Stomach (tissue), 19 donors: ENCODE measurements at regions of chr15 and their contacts with region 1.

Region 1: GRCh38 chr15:82647045-82647834 is at the start of gene CPEB1:
- DNase-seq: peak in 1 of 2 donors; percentile 62
- H3K4me3 ChIP-seq: peak within 1 kb of the TSS; percentile 50 to 71 (median 59)
- H3K27ac ChIP-seq: peak within 1 kb of the TSS in 3 of 5 donors; percentile 24 to 66 (median 45)
- H3K4me1 ChIP-seq: peaks cover 22 to 31% (median 26%) of the 10 kb centered on the region in 4 donors
- H3K27me3 ChIP-seq: peaks cover 14 to 68% (median 57%) of the 10 kb centered on the region in 3 donors
- CTCF ChIP-seq: no peak
- EP300 ChIP-seq: no peak
- POLR2A ChIP-seq: no peak
- total RNA-seq, gene CPEB1: 1.1 to 6.4 (median 1.2) TPM in 3 of 5 donors, not detected in the others

Region 2: GRCh38 chr15:82585072-82585471 is 62.2 kb before region 1 on chr15:
- intact Hi-C with region 1: loop called (anchors 10 kb)
- DNase-seq: peak in 1 of 2 donors; percentile 23
- H3K4me3 ChIP-seq: no peak overlapping the region
- H3K27ac ChIP-seq: no peak overlapping the region
- H3K4me1 ChIP-seq: no peaks in the 10 kb centered on the region
- H3K27me3 ChIP-seq: no peaks in the 10 kb centered on the region
- CTCF ChIP-seq: no peak
- EP300 ChIP-seq: no peak
- POLR2A ChIP-seq: no peak